PC-3 (cell line): ENCODE measurements at regions of chr7 and their contacts with region 1.

Region 1: GRCh38 chr7:121994625-121995410 is 121.9 kb downstream of the PTPRZ1 start:
- DNase-seq: peak; percentile 78
- ATAC-seq: peak; percentile 96
- H3K4me3 ChIP-seq: no peak overlapping the region
- H3K27ac ChIP-seq: no peak overlapping the region
- H3K4me1 ChIP-seq: no peaks in the 10 kb centered on the region
- H3K27me3 ChIP-seq: 0 out of 2 replicates have a peak, but pooled peaks cover 4% of the 10 kb centered on the region
- CTCF ChIP-seq: peak; percentile 72

Region 2: GRCh38 chr7:121140790-121141189 is 854.0 kb before region 1 on chr7:
- CTCF ChIA-PET with region 1: no interaction called
- POLR2A ChIA-PET with region 1: no interaction called
- intact Hi-C with region 1: loop called (anchors 5 kb)
- DNase-seq: no peak
- ATAC-seq: no peak
- H3K4me3 ChIP-seq: no peak overlapping the region
- H3K27ac ChIP-seq: no peak overlapping the region
- H3K4me1 ChIP-seq: no peaks in the 10 kb centered on the region
- H3K27me3 ChIP-seq: no peaks in the 10 kb centered on the region
- CTCF ChIP-seq: no peak

Region 3: GRCh38 chr7:121366852-121367431 is 627.9 kb before region 1 on chr7:
- CTCF ChIA-PET with region 1: interaction called, 8 read pairs
- POLR2A ChIA-PET with region 1: no interaction called
- intact Hi-C with region 1: loop called (anchors 1 kb)
- DNase-seq: peak; percentile 46
- ATAC-seq: peak; percentile 53
- H3K4me3 ChIP-seq: no peak overlapping the region
- H3K27ac ChIP-seq: no peak overlapping the region
- H3K4me1 ChIP-seq: peaks cover 9% of the 10 kb centered on the region
- H3K27me3 ChIP-seq: no peaks in the 10 kb centered on the region
- CTCF ChIP-seq: peak; percentile 86

Region 4: DNA sequence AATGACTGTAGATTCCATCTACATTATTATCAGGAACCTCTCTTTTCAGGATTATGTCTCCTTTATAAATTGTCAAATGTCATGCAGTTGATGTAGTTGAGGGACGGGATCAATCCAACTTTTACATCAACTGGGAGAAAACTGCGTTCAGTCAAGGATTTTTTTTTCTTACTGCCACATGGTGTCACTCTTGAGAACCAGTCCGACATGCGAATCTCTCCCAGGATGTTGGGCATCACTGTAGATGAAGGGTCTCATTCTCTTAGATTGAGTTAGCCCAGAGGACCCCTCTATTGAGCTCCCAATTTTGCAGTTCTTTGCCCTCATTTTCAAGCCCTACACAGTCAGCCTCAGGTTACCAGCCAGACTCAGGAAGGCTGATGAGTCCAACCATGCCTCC is 242.1 kb before region 1 on chr7:
- CTCF ChIA-PET with region 1: no interaction called
- POLR2A ChIA-PET with region 1: no interaction called
- intact Hi-C with region 1: loop called (anchors 1 kb)
- DNase-seq: peak; percentile 26
- ATAC-seq: no peak
- H3K4me3 ChIP-seq: no peak overlapping the region
- H3K27ac ChIP-seq: no peak overlapping the region
- H3K4me1 ChIP-seq: no peaks in the 10 kb centered on the region
- H3K27me3 ChIP-seq: peaks cover 58% of the 10 kb centered on the region
- CTCF ChIP-seq: peak; percentile 56